Cardiac septum (tissue), 1 donor: ENCODE measurements at regions of chr20 and their contacts with region 1.

Region 1: GRCh38 chr20:733861-734260 is 34.4 kb downstream of the SLC52A3 start:
- DNase-seq: no peak

Region 2: GRCh38 chr20:483813-484644 is 249.8 kb before region 1 on chr20:
- intact Hi-C with region 1: loop called (anchors 10 kb)
- DNase-seq: peak; percentile 84